ENCODE measurements at regions of chr3 and their contacts with region 1.

Region 1: GRCh38 chr3:157081681-157082210 is 78.2 kb downstream of the CCNL1 start:
- H3K4me3 Mint-ChIP-seq: no peak overlapping the region
- H3K27ac Mint-ChIP-seq: no peak overlapping the region
- H3K4me1 Mint-ChIP-seq: no peaks in the 10 kb centered on the region
- H3K27me3 Mint-ChIP-seq: peaks cover 8% of the 10 kb centered on the region

Region 2: DNA sequence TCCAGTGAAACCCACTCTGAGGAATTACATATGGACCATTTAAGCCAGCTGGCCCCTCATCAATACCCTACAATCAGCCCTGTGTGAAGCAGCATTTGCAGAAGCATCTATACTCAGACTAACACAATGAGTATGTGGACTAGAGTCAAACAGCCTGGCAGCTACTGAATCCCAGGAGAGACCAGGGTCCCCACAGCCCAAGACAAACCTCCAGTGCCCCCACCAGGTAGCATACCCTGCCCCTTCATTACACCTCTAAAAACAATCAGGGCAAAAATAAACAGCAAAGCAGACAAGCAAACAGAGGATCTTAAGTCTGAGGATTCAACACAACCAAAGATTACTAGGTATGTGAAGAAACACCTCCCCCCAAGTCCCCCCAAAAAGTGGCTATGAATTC is 98.2 kb before region 1 on chr3:
- intact Hi-C with region 1: loop called (anchors 10 kb)
- H3K4me3 Mint-ChIP-seq: no peak overlapping the region
- H3K27ac Mint-ChIP-seq: no peak overlapping the region
- H3K4me1 Mint-ChIP-seq: peaks cover 23% of the 10 kb centered on the region
- H3K27me3 Mint-ChIP-seq: peaks cover 3% of the 10 kb centered on the region

Region 3: GRCh38 chr3:157064402-157064801 is 17.3 kb before region 1 on chr3:
- intact Hi-C with region 1: no loop called
- H3K4me3 Mint-ChIP-seq: no peak overlapping the region
- H3K27ac Mint-ChIP-seq: peak overlapping the region; percentile 49
- H3K4me1 Mint-ChIP-seq: peaks cover 17% of the 10 kb centered on the region
- H3K27me3 Mint-ChIP-seq: peaks cover 6% of the 10 kb centered on the region

Region 4: GRCh38 chr3:157136647-157137387 is 55.1 kb after region 1 on chr3:
- intact Hi-C with region 1: loop called (anchors 2 kb)
- H3K4me3 Mint-ChIP-seq: no peak overlapping the region
- H3K27ac Mint-ChIP-seq: no peak overlapping the region
- H3K4me1 Mint-ChIP-seq: no peaks in the 10 kb centered on the region
- H3K27me3 Mint-ChIP-seq: no peaks in the 10 kb centered on the region

Measured in dendritic cell treated with granulocyte-macrophage colony-stimulating factor and Interleukin-4, amounts not matched to agents 40 ng/mL and 50 ng/mL, for 4 days (primary cell).